Left cardiac atrium (tissue), 4 donors: ENCODE measurements at regions of chr2 and their contacts with region 1.

Region 1: GRCh38 chr2:126776692-126777619 is 121.0 kb downstream of the GYPC start:
- DNase-seq: peak; percentile 85
- ATAC-seq: peak; percentile 91 to 95

Region 2: GRCh38 chr2:125745514-125745913 is 1031.4 kb before region 1 on chr2:
- intact Hi-C with region 1: loop called (anchors 5 to 10 kb)
- DNase-seq: no peak
- ATAC-seq: peak; percentile 50 to 67

Region 3: DNA sequence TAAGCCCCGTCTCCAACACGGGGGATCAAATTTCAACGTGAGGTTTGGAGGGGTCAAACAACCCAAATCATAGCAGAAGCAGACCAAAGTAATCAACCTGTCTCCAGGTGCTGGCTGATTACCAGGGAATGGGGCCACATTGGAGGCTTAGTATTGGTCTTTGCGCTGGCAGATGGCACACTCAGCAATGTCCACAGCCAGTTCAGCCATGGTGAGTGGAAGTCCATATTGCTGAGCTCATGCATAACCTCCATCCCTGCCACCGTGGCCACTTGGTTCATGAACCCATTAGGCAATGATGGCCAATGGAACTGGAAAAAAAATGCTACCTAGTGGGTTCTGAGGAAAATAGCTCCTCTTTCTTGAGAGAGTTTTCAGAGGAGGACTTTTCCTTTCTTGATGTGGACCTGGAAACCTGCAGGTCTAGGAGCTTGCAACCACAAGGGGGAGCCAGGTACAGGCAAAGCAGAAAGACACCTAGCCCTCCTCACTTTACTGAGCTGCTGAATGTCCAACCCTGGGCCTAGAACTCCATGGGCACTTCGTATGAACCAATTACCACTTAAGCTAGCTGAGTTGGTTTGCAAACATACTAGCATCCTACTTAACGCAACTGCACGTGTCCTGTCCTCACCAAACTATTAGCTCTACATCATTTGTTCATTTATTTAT is 249.0 kb before region 1 on chr2:
- intact Hi-C with region 1: loop called (anchors 2 to 5 kb)
- DNase-seq: peak; percentile 67
- ATAC-seq: peak; percentile 57 to 64

Region 4: GRCh38 chr2:126534478-126534877 is 242.5 kb before region 1 on chr2:
- intact Hi-C with region 1: loop called (anchors 2 to 5 kb)
- DNase-seq: no peak
- ATAC-seq: no peak

Region 5: DNA sequence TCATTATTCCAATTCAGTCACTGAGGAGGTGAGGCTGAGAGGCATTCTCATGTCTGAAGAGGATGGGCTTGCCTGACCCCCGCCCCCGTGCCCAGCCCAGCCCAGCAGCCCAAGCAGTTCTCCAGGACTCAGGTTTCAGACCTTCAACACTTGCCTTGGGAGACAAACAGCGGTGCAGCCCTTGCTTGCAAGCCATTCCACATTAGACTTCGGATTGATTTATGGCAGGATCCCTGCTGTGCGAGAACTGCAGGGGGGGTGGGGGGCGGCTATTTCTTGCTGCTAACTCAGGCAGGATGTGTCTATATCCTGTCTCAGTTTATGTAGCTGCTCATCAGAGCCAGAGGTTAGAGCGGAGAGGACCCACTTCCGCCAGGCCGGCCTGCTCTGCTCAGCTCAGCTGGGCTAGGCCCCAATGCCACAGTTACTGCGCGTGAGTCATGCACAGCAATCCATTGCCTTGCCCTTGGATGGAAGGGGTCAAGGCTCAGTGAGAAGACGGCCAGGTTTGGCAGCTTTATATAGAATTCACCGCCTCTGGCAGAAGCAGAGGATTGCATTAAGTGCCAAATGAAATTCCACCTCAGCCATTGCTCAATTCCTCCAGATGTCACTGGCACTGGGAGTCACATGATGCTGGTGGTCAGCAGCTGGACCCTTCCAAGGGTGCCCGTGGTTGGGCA is 119.2 kb before region 1 on chr2:
- intact Hi-C with region 1: loop called in 1 of 2 experiments (anchors 10 kb)
- DNase-seq: peak; percentile 89
- ATAC-seq: peak; percentile 76 to 89